Colonic mucosa (tissue), 4 donors: ENCODE measurements at regions of chr20 and their contacts with region 1.

Region 1: DNA sequence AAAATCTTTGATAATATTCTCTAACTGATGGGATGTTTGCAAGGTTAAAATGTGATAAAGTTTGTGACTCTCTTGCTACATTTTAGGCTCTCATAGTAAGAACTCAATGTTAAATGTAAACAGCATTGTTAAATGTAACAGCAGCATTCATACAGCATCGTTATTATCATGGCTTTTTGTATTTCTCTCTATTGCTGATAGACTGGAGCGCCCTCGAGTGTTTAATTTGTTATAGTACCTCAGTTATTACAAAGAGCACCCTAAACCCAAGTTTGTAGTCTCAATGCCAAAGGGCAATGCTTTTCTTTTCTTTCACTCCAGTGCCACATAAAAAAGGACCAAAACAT is 14.9 kb upstream of the TTPAL start:
- DNase-seq: peak; percentile 65
- H3K4me3 ChIP-seq: no peak overlapping the region
- H3K27ac ChIP-seq: peak overlapping the region; percentile 46
- H3K4me1 ChIP-seq: peaks cover 2% of the 10 kb centered on the region
- H3K27me3 ChIP-seq: no peaks in the 10 kb centered on the region
- CTCF ChIP-seq: peak; percentile 44

Region 2: DNA sequence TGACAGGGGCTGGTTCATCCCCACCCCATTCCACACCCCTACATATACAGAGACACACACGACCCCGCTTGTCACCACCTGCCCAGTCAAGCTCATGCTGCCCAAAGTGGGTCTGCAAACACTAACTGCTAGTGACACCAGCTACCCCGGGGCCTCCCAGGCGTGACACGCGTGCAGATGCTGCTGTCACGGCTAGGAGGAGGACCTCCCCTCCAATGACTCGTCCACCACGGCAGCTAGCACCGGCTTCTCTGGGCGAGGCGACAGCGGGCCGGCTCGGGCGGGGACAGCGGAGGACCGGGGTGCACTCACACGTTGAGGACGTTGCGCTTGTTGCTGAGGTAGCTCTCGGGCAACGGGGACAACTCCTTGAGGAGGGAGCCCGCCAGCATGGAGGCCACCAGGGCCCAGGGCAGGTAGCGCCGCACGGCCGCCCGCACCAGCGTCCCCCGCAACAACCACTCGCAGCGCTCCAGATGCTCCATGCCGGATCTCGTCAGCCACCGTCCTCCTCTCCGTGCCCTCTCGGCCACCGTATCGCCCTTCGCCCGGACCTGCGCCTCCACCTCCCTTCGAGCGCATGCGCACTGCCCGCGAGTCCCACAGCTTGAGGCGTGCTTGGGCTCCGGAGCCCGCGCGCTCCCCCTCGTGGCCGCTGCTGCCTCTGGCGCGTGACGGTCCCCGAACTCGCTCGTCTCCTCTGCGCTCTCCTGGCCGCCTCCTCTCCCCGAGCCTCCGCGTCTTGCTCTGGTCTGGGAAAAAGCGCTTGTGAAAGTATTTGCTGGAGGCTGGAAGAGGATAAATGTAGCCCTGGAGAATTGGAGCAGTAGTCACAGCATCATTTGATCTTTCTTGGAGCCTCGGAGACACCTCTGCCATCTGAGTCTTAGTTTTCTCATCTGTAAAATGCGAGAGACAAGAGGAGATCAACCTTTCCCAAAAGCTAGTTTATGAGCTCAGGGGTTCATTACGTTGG is 149.8 kb before region 1 on chr20 and contains the start of gene FITM2:
- intact Hi-C with region 1: loop called (anchors 10 kb)
- DNase-seq: peak; percentile 99
- H3K4me3 ChIP-seq: peak within 1 kb of the TSS; percentile 97
- H3K27ac ChIP-seq: peak within 1 kb of the TSS; percentile 56
- H3K4me1 ChIP-seq: peaks cover 4% of the 10 kb centered on the region
- H3K27me3 ChIP-seq: no peaks in the 10 kb centered on the region
- CTCF ChIP-seq: peak; percentile 84
- total RNA-seq, gene FITM2: 10.1 to 11.6 TPM

Region 3: DNA sequence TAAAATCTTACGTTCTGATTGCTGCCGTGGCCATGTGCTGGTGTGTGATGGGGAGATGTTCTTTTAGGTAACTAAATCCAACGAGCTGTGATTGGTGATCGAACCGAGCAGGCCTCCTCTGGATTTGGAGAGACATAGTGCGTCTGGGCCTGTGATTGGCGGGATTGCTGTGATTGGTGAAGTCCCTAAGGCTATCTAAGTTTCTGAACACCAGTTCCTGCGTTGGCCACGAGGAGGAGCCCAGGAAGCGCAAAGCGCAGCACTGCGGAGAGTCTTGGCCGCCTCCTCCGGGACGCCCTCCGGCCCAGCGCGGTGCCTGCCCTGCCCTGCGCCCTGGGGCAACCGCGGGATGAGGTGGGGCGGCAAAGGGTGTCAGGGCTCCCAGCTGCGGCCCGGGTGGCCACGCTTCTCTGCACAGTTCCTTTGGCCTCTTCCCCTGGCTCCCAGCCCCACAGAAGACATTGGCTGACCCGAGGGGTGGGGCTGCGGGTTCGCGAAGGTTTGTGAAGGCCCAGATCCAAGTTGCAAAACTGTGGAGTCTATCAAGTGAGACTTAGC is 72.2 kb before region 1 on chr20:
- intact Hi-C with region 1: loop called (anchors 2 kb)
- DNase-seq: peak; percentile 90
- H3K4me3 ChIP-seq: no peak overlapping the region
- H3K27ac ChIP-seq: no peak overlapping the region
- H3K4me1 ChIP-seq: peaks cover 8% of the 10 kb centered on the region
- H3K27me3 ChIP-seq: no peaks in the 10 kb centered on the region
- CTCF ChIP-seq: peak; percentile 71

Region 4: GRCh38 chr20:44706301-44707017 is 245.7 kb after region 1 on chr20:
- intact Hi-C with region 1: no loop called
- DNase-seq: no peak
- H3K4me3 ChIP-seq: no peak overlapping the region
- H3K27ac ChIP-seq: no peak overlapping the region
- H3K4me1 ChIP-seq: no peaks in the 10 kb centered on the region
- H3K27me3 ChIP-seq: no peaks in the 10 kb centered on the region
- CTCF ChIP-seq: no peak